ENCODE measurements at regions of chr4 and their contacts with region 1.

Region 1: GRCh38 chr4:16505726-16506125 is 279.5 kb upstream of the TAPT1 start:
- DNase-seq: no peak
- ATAC-seq: no peak
- H3K4me3 ChIP-seq: no peak overlapping the region
- H3K27ac ChIP-seq: no peak overlapping the region
- H3K4me1 ChIP-seq: no peaks in the 10 kb centered on the region
- H3K27me3 ChIP-seq: no peaks in the 10 kb centered on the region

Region 2: DNA sequence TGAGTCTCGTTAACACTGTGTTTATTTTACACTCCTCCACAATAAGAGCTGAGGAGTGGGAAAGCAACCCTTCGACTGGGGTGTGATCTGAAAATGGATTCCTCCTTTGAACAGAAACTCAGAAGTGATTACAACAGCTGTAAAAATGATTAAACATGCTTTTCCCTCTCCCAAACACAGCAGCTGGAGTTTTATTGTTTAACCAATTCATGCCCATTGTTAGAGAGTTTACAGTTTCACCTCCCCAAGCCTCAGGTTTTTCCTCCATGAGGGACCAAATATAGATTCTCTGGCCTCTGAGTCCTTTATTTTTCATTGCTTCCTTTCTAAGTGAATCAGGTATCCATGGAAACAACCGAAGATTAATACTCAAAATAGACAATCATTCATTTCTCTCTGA is 16.5 kb before region 1 on chr4:
- intact Hi-C with region 1: no loop called
- DNase-seq: no peak
- ATAC-seq: no peak
- H3K4me3 ChIP-seq: no peak overlapping the region
- H3K27ac ChIP-seq: no peak overlapping the region
- H3K4me1 ChIP-seq: peaks cover 0 to 1% of the 10 kb centered on the region in 2 donors
- H3K27me3 ChIP-seq: no peaks in the 10 kb centered on the region

Region 3: GRCh38 chr4:16752150-16752549 is 246.4 kb after region 1 on chr4:
- intact Hi-C with region 1: loop called in 1 of 2 experiments (anchors 10 kb)
- DNase-seq: no peak
- ATAC-seq: no peak
- H3K4me3 ChIP-seq: no peak overlapping the region
- H3K27ac ChIP-seq: no peak overlapping the region
- H3K4me1 ChIP-seq: no peaks in the 10 kb centered on the region
- H3K27me3 ChIP-seq: no peaks in the 10 kb centered on the region

Measured in aorta (tissue), 5 donors.